ENCODE measurements at regions of chr21 and their contacts with region 1.

Region 1: GRCh38 chr21:33976082-33977016 is 60.7 kb upstream of the ATP5PO start:
- DNase-seq: peak; percentile 85
- H3K4me3 Mint-ChIP-seq: peak overlapping the region; percentile 71
- H3K27ac Mint-ChIP-seq: peak overlapping the region; percentile 97
- H3K4me1 Mint-ChIP-seq: peaks cover 72% of the 10 kb centered on the region
- H3K27me3 Mint-ChIP-seq: no peaks in the 10 kb centered on the region

Region 2: GRCh38 chr21:33924079-33924765 is 52.1 kb before region 1 on chr21:
- intact Hi-C with region 1: loop called (anchors 2 kb)
- DNase-seq: peak; percentile 97
- H3K4me3 Mint-ChIP-seq: no peak overlapping the region
- H3K27ac Mint-ChIP-seq: no peak overlapping the region
- H3K4me1 Mint-ChIP-seq: peaks cover 13% of the 10 kb centered on the region
- H3K27me3 Mint-ChIP-seq: no peaks in the 10 kb centered on the region

Region 3: DNA sequence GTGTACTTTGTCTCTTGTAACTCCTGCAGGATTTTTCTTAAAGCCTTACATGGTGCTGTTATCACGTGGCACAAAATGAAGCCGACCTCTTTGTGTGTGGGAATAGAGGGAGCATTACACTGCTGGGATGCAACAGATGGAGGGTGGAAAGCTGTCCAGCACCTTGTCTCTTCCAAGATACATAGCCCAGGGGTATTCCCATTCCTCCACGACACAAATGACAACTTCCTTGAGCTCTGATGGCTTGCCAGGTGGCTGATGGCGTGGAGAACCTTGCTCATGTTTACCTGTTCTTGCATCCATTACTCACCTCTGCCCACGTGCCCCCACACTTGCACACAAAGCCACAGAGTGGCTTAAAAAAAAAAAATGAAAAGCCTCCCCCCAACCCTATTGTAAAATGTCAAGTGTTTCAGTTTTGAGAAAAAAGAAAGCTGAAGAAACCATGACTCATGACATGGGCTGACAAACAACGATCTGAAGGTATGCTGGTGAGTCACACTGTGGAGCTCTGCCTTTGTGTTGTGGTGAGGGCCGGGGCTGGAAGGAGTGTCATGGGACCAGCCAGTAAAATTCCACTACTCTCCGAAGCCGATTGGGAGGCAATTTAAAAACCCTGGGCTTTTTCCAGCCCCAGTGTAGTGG is 28.8 kb before region 1 on chr21:
- intact Hi-C with region 1: loop called (anchors 1 kb)
- DNase-seq: peak; percentile 95
- H3K4me3 Mint-ChIP-seq: peak overlapping the region; percentile 80
- H3K27ac Mint-ChIP-seq: peak overlapping the region; percentile 100
- H3K4me1 Mint-ChIP-seq: peaks cover 70% of the 10 kb centered on the region
- H3K27me3 Mint-ChIP-seq: peaks cover 3% of the 10 kb centered on the region

Region 4: GRCh38 chr21:33998402-33998801 is 22.1 kb after region 1 on chr21:
- intact Hi-C with region 1: no loop called
- DNase-seq: peak; percentile 71
- H3K4me3 Mint-ChIP-seq: no peak overlapping the region
- H3K27ac Mint-ChIP-seq: no peak overlapping the region
- H3K4me1 Mint-ChIP-seq: peaks cover 36% of the 10 kb centered on the region
- H3K27me3 Mint-ChIP-seq: no peaks in the 10 kb centered on the region

Region 5: GRCh38 chr21:34020005-34020847 is 43.9 kb after region 1 on chr21:
- intact Hi-C with region 1: loop called (anchors 1 kb)
- DNase-seq: no peak
- H3K4me3 Mint-ChIP-seq: peak overlapping the region; percentile 41
- H3K27ac Mint-ChIP-seq: peak overlapping the region; percentile 34
- H3K4me1 Mint-ChIP-seq: peaks cover 30% of the 10 kb centered on the region
- H3K27me3 Mint-ChIP-seq: no peaks in the 10 kb centered on the region

Region 6: DNA sequence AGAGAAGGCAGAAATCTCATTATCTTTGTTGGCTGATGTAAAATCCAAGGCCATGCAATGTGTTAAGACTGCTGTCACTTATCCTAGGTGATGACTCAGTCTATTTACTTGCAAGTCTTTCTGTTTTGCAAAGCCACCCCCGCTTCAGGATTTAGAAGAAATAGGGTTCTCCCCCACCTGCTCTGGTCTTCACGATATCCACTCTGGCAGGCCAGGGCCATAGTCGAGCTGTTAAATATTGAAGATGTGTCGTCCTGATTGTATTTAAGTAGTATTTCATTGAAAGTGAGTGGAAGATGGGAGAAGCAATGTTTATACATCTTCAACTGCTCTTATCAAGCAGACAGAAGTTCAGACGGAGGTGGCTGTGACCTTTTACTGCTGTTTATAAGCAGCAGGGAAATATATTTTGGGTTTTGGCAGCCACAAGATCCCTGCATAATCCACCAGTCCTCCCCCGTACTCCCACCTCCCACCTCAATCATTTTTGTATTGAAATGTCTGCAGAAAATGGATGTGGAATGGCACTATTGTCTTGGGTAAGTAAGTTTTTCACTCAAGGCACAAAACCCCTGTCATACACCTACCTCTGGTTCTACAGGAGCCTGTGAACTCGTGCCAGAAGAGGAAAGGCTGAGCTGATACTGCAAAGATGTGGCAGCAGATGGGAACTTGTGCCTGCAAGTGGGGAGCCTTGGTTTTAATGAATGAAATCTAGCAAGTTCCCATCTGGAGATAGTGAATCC is 214.4 kb after region 1 on chr21:
- intact Hi-C with region 1: loop called (anchors 2 kb)
- DNase-seq: peak; percentile 58
- H3K4me3 Mint-ChIP-seq: peak overlapping the region; percentile 46
- H3K27ac Mint-ChIP-seq: peak overlapping the region; percentile 88
- H3K4me1 Mint-ChIP-seq: peaks cover 35% of the 10 kb centered on the region
- H3K27me3 Mint-ChIP-seq: no peaks in the 10 kb centered on the region

Region 7: DNA sequence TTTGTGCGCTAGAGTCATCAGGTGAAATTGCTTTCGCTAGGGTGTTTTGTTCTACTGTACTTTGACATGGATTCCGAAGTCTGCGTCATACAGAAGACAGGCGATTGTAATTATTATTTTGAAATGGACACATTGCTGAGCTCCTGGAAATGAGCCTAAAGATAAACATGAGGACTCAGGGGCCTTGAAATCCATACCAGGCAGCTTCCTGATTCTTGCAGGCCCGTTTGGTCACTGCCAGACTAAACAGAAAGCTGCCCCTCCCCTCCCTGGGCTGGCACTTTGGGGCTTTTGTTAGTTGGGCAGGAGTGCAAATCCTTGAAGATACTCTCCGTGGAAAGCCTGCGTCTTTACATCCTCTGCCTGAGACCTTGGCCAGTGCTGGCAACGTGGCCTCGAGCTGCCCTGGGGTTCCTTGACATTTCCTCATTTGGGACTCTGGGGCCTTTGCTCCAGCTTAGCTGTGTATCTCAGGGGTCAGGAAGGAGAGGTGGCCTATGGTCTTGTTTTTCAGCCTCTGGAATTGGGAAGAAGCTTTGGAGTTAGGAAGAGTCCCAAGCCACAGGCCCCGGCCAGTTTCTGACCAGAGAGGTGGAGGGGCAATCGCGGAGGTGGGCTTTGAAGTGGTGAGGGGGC is 360.5 kb after region 1 on chr21:
- intact Hi-C with region 1: no loop called
- DNase-seq: no peak
- H3K4me3 Mint-ChIP-seq: no peak overlapping the region
- H3K27ac Mint-ChIP-seq: no peak overlapping the region
- H3K4me1 Mint-ChIP-seq: peaks cover 15% of the 10 kb centered on the region
- H3K27me3 Mint-ChIP-seq: no peaks in the 10 kb centered on the region